ENCODE measurements at regions of chr5 and their contacts with region 1.

Region 1: GRCh38 chr5:73437101-73437776 is 11.3 kb downstream of the FOXD1 start:
- DNase-seq: no peak
- ATAC-seq: peak; percentile 25
- H3K4me3 ChIP-seq: no peak overlapping the region
- H3K27ac ChIP-seq: no peak overlapping the region
- H3K4me1 ChIP-seq: peaks cover 6 to 15% of the 10 kb centered on the region in 2 donors
- H3K27me3 ChIP-seq: peaks cover 93 to 100% of the 10 kb centered on the region in 2 donors
- CTCF ChIP-seq: no peak

Region 2: GRCh38 chr5:73298772-73299630 is 138.2 kb before region 1 on chr5:
- intact Hi-C with region 1: loop called in 1 of 2 experiments (anchors 5 kb)
- DNase-seq: no peak
- ATAC-seq: peak; percentile 36
- H3K4me3 ChIP-seq: no peak overlapping the region
- H3K27ac ChIP-seq: no peak overlapping the region
- H3K4me1 ChIP-seq: peaks cover 0 to 9% of the 10 kb centered on the region in 2 donors
- H3K27me3 ChIP-seq: peaks cover 81 to 100% of the 10 kb centered on the region in 2 donors
- CTCF ChIP-seq: no peak